Sciatic nerve (tissue), 2 donors: ENCODE measurements at regions of chr1 and their contacts with region 1.

Region 1: GRCh38 chr1:207346562-207346912 is 25.1 kb downstream of the CD55 start:
- DNase-seq: no peak
- ATAC-seq: peak; percentile 36

Region 2: GRCh38 chr1:206021626-206022365 is 1324.7 kb before region 1 on chr1:
- intact Hi-C with region 1: loop called (anchors 5 kb)
- DNase-seq: no peak
- ATAC-seq: no peak

Region 3: DNA sequence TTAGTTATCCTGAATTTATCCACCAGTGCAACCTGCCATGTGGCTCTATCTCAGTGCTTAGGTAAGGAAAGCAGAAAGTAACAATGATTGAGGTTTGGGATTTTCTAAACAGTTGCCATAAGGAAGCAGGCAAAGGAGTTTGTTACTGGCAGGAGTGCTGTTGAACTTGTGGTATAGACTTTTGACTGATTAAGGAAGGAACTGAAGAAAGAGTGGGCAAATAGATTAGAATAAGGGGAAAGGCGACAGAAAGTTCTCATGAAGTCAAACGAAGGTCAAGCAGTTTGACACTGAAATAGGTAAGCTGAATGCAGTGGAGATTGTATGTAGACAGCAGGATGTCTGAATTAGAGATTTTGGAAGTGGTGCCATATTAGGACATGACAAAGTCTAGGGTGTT is 83.4 kb after region 1 on chr1:
- intact Hi-C with region 1: no loop called
- DNase-seq: no peak
- ATAC-seq: no peak

Region 4: DNA sequence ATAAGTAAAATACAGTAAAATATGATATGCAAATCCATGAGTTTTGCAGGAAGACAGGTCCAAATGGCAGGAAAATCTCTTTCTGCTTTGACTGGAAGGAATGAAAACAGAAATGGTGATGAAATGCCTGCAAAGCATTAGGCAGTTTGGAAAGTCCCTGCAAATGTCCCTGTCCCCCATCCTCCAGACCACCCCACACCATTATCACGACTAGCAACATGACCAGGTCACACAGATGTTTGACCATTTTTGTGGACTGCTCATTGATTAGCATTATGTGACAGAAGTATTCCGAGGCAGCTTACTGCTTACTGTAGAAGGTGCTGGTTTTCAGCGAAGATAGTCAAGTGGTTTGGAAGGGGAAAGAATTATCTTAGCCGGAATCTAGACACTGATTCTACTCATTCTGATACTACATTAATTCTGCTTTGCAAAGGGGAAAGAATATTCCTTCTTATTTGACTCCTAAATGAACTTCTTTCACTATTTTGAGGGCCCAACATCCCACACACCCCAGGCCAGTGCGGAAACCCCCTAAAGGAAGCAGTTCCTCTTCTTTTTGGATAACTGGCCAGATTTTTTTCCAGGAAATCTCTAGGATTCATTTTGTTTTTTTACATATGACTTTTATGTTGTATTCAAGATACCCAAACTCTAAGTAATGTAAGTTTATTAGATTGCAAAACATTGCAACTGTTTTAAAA is 98.1 kb after region 1 on chr1:
- intact Hi-C with region 1: no loop called
- DNase-seq: no peak
- ATAC-seq: no peak